Activated naive CD4-positive, alpha-beta T cell treated with anti-CD3 and anti-CD28 coated beads for 36 hours (primary cell): ENCODE measurements at regions of chr6 and their contacts with region 1.

Region 1: DNA sequence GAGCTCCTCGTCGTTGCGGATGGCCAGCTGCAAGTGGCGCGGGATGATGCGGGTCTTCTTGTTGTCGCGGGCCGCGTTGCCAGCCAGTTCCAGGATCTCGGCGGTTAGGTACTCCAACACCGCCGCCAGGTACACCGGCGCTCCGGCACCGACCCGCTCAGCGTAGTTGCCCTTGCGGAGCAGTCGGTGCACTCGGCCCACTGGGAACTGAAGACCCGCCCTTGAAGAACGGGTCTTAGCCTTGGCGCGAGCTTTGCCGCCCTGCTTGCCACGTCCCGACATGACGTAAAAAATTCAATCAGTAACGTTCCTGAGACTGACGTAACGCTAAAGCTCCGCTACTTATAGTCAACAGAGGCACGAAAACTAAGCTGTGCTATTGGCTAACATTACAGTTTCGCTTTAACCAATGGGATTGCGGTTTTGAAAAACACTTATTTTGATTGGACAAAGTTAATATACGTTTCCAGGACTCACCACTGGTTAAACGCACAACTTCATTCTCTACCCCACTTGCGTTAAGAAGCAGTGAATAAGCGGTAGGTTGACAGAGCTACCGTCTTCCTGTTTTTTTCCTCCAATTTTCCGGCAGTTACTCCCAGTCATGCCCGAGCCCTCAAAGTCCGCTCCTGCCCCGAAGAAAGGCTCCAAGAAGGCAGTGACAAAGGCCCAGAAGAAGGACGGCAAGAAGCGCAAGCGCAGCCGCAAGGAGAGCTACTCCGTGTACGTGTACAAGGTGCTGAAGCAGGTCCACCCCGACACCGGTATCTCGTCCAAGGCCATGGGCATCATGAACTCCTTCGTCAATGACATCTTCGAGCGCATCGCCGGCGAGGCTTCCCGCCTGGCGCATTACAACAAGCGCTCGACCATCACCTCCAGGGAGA is 73.9 kb downstream of the OR2B2 start:
- DNase-seq: peak; percentile 87
- H3K4me3 Mint-ChIP-seq: no peak overlapping the region
- H3K27ac Mint-ChIP-seq: no peak overlapping the region
- H3K4me1 Mint-ChIP-seq: peaks cover 26% of the 10 kb centered on the region
- H3K27me3 Mint-ChIP-seq: peaks cover 7% of the 10 kb centered on the region

Region 2: DNA sequence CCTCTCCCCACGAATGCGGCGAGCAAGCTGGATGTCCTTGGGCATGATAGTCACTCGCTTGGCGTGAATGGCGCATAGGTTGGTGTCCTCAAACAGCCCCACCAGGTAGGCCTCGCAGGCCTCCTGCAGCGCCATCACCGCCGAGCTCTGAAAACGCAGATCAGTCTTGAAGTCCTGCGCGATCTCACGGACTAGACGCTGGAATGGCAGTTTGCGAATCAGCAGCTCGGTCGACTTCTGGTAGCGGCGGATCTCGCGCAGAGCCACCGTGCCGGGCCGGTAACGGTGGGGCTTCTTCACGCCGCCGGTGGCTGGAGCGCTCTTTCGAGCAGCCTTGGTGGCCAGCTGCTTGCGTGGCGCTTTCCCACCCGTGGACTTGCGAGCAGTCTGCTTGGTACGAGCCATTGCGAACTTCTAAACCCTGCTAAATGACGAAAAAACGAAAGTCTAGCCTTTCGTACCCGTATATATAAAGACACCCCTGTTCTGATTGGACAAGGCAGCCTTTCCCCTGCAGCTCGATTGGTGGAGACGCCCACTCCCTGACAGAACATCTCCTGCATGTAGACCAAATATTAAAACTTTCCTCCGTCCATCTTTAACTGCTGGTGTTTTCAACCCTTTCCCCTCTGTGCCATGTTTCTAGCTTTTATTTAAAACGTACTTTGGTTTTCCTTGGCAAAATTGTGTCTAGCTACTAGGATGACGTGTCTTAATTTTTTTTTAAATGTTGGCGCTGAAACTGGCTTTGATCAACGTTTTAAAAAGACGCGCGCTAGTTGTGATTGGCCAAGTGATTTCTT is 1641.3 kb before region 1 on chr6:
- CTCF ChIA-PET with region 1: no interaction called
- intact Hi-C with region 1: loop called (anchors 10 kb)
- DNase-seq: peak; percentile 86
- H3K4me3 Mint-ChIP-seq: peak overlapping the region; percentile 96
- H3K27ac Mint-ChIP-seq: peak overlapping the region; percentile 99
- H3K4me1 Mint-ChIP-seq: peaks cover 36% of the 10 kb centered on the region
- H3K27me3 Mint-ChIP-seq: peaks cover 5% of the 10 kb centered on the region

Region 3: DNA sequence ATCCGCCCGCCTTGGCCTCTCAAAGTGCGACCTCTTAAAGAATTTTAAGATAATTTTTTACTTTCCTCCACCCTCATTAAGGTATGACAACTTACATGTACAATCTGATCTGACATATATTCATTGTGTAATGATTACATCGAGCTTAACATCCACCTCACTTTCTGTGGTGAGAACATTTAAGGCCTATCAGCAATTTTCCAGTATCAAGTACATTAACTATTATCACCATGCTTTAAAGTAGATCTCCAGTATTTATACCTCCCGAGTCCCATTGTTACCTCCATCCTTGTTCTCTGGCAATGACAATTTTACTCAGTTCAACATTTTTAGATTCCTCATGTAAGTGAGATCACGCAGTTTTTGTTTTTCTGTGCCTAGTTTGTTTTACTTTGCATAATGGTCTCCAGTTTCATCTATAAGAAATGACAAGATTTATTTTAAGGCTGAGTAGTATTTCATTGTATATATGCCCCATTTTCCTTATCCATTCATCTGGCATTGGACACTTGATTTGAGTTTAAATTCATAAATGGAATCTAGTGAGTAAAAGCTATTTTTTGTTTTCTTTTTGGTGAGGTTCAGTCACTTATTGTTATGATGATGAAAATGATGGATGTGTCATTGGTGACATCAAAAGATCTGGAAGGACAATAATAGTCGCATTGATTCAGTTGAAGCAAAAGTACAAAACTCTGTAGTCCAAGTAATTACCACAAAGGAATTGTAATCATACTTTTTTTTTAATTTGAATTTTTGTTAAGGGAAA is 13.1 kb before region 1 on chr6:
- CTCF ChIA-PET with region 1: no interaction called
- intact Hi-C with region 1: loop called (anchors 1 kb)
- DNase-seq: no peak
- H3K4me3 Mint-ChIP-seq: peak overlapping the region; percentile 89
- H3K27ac Mint-ChIP-seq: peak overlapping the region; percentile 98
- H3K4me1 Mint-ChIP-seq: peaks cover 24% of the 10 kb centered on the region
- H3K27me3 Mint-ChIP-seq: no peaks in the 10 kb centered on the region

Region 4: DNA sequence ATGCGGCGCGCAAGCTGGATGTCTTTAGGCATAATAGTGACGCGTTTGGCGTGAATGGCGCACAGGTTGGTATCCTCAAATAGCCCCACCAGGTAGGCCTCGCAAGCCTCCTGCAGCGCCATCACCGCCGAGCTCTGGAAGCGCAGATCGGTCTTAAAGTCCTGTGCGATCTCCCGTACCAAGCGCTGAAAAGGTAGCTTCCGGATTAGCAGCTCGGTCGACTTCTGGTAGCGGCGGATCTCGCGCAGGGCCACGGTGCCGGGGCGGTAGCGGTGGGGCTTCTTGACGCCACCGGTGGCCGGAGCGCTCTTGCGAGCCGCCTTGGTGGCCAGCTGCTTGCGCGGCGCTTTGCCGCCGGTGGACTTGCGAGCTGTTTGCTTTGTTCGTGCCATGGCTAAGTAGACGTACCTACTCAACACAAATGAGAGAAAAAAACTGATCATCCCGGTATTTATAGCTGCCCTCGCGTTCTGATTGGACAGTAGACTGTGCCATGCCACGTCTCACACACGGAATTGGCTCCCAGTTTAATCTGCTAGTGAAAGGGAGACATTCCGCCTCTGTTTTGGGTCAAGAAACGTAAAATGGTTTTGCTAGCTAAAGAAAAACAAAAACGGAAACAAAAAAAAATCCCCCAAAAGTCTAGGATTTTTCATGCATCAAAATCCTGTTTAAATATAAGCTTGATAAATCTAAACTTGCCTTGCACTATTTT is 33.8 kb after region 1 on chr6:
- CTCF ChIA-PET with region 1: interaction called, 7 read pairs
- intact Hi-C with region 1: loop called (anchors 1 kb)
- DNase-seq: peak; percentile 81
- H3K4me3 Mint-ChIP-seq: peak overlapping the region; percentile 91
- H3K27ac Mint-ChIP-seq: peak overlapping the region; percentile 97
- H3K4me1 Mint-ChIP-seq: peaks cover 34% of the 10 kb centered on the region
- H3K27me3 Mint-ChIP-seq: peaks cover 8% of the 10 kb centered on the region

Region 5: DNA sequence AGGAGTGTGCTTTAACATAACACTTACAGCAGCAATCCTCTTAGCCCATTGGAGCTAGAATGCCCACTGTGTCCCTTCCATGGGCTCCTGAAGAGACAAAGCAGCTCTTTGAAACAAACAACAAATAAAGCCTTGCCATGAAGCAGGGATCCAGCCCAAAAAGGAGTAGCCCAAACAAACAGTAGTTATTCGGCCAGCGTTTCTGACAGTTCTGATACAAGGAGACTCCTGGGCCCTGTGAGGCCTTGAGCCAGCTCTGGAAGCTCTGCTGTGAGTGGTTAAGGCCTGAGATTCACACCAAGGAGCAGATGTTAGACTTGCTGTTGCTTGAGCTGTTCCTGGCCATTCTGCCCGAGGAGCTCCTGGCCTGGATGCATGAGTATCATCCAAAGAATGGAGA is 269.2 kb after region 1 on chr6:
- CTCF ChIA-PET with region 1: no interaction called
- intact Hi-C with region 1: no loop called
- DNase-seq: no peak
- H3K4me3 Mint-ChIP-seq: no peak overlapping the region
- H3K27ac Mint-ChIP-seq: no peak overlapping the region
- H3K4me1 Mint-ChIP-seq: peaks cover 9% of the 10 kb centered on the region
- H3K27me3 Mint-ChIP-seq: no peaks in the 10 kb centered on the region